ENCODE measurements at regions of chr4 and their contacts with region 1.

Region 1: DNA sequence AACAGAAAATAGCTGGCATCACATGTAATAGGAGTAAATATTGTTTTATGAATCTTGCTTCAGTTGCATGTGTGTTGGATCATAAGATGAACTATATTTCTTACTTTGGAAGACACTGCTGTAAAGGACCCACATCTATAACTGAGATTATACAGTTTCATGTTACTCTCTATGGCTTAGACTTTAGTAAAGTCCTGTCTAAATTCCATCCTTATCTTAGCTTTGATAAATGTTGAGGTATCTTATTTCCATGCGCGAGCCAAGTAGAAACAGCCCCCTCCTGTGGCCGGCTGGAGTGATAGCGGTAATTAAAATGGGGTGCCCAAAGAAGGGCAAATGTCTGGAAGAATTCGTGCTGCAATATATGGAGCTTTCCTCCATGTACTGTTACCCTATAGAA is 43.0 kb downstream of the CCDC158 start:
- DNase-seq: peak; percentile 54
- ATAC-seq: peak; percentile 47
- H3K4me3 Mint-ChIP-seq: no peak overlapping the region
- H3K27ac Mint-ChIP-seq: no peak overlapping the region
- H3K4me1 Mint-ChIP-seq: peaks cover 38% of the 10 kb centered on the region
- H3K27me3 Mint-ChIP-seq: no peaks in the 10 kb centered on the region
- CTCF ChIP-seq: peak; percentile 66

Region 2: DNA sequence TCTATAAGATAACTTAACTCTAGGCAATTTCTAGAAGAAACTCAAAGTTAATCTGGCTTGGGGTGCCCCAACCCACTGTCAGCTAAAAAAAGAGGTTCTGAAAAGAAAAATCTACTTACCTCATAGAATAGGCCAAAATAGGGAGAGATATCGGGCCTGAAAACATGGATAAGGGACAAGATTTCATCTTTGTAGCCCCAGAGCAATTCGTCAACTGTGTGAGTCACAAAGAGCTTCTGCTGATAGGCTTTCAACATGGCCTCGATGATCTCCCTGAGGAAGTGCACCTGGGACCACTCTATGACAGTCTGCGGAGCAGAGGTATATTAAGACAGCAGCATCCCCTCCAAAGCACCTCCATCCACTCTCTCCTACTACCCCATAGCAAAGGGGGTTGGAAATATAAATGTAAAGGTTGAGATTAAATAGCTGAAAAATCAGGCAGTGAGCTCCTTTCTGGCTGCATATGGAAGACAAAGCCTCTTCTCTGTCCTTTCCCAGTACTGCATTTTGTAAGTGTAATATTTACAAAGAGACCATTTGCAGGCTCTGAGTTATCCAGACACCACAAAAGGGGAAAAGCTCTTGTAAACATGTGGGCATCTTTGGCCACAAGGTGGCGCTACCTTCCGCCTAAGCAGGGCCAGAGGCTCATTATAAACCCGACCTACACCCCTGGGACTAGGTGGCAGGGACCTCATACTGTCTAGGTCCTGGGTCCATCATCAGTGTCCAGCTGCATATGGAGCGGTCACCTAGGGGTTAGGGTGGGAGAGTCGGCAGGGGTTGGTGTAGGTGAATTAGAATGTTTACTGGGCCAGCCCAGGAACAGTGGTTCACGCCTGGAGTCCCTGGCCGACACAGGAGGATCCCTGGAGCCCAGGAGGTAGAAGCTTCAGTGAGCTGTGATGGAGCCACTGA is 198.3 kb before region 1 on chr4:
- CTCF ChIA-PET with region 1: interaction called, 122 read pairs
- POLR2A ChIA-PET with region 1: no interaction called
- DNase-seq: peak; percentile 92
- ATAC-seq: peak; percentile 99
- H3K4me3 Mint-ChIP-seq: no peak overlapping the region
- H3K27ac Mint-ChIP-seq: no peak overlapping the region
- H3K4me1 Mint-ChIP-seq: no peaks in the 10 kb centered on the region
- H3K27me3 Mint-ChIP-seq: no peaks in the 10 kb centered on the region
- CTCF ChIP-seq: peak; percentile 93

Region 3: GRCh38 chr4:76198411-76199237 is 179.3 kb before region 1 on chr4:
- CTCF ChIA-PET with region 1: interaction called, 20 read pairs
- POLR2A ChIA-PET with region 1: no interaction called
- DNase-seq: no peak
- ATAC-seq: no peak
- H3K4me3 Mint-ChIP-seq: no peak overlapping the region
- H3K27ac Mint-ChIP-seq: peak overlapping the region; percentile 81; the same call in 1 of the 2 replicates
- H3K4me1 Mint-ChIP-seq: peaks cover 23% of the 10 kb centered on the region
- H3K27me3 Mint-ChIP-seq: no peaks in the 10 kb centered on the region
- CTCF ChIP-seq: no peak

Region 4: DNA sequence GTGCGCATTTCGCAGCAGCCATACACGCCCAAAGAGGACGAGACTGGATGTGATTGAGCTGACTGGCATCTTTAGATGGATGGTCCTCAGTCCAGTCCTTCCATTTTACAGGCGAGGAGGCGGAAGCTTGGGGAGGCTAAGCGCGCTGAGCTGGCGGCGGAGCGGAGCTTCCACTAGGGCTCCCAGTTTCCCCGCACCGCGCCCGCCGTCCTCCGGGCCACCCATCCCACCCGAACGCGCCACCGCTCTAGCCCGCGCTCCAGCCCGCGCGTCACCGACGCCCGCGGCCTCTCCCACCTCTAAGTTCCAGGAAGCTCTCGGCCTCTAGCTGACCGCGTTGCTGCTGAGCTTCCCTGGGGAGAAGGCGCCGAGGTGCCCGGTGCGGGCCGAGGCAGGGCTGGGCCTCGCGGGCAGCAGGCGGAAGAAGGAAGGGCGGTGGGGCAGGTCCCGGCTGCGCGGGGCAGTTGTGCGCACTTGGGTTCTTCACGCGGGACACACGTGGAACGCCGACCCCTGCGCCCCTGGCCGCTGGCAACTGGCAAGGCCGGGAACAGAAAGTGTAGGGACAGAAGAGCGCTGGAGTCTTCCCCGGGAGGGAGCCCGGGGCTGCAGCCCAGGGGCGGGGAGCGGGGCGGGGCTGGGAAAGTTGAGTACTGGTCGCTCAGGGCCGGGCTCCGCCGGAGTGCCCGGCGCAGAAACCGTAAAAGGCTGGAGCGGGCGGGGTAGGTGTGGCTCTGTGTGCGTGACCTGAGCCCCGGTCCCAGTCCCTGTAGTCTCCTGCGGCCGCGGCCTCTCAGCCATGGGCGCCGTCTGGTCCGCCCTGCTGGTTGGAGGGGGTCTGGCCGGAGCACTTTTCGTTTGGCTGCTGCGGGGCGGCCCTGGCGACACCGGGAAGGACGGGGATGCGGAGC is 71.7 kb before region 1 on chr4 and contains the start of gene STBD1:
- CTCF ChIA-PET with region 1: interaction called, 46 read pairs
- POLR2A ChIA-PET with region 1: no interaction called
- DNase-seq: peak; percentile 83
- ATAC-seq: peak; percentile 85
- H3K4me3 Mint-ChIP-seq: peak within 1 kb of the TSS; percentile 84
- H3K27ac Mint-ChIP-seq: no peak within 1 kb of the TSS
- H3K4me1 Mint-ChIP-seq: peaks cover 12% of the 10 kb centered on the region
- H3K27me3 Mint-ChIP-seq: peaks cover 33% of the 10 kb centered on the region
- CTCF ChIP-seq: no peak
- total RNA-seq, gene STBD1: 1.4 to 2.6 TPM (median 2.0 TPM) in 3 replicates

Region 5: GRCh38 chr4:76447393-76447851 is 69.5 kb after region 1 on chr4:
- CTCF ChIA-PET with region 1: no interaction called
- POLR2A ChIA-PET with region 1: no interaction called
- DNase-seq: no peak
- ATAC-seq: no peak
- H3K4me3 Mint-ChIP-seq: no peak overlapping the region
- H3K27ac Mint-ChIP-seq: no peak overlapping the region
- H3K4me1 Mint-ChIP-seq: peaks cover 45% of the 10 kb centered on the region
- H3K27me3 Mint-ChIP-seq: no peaks in the 10 kb centered on the region; the same call in 1 of the 2 replicates
- CTCF ChIP-seq: no peak

Measured in WTC11 (cell line).